GM10248 (cell line): ENCODE measurements at regions of chr3 and their contacts with region 1.

Region 1: DNA sequence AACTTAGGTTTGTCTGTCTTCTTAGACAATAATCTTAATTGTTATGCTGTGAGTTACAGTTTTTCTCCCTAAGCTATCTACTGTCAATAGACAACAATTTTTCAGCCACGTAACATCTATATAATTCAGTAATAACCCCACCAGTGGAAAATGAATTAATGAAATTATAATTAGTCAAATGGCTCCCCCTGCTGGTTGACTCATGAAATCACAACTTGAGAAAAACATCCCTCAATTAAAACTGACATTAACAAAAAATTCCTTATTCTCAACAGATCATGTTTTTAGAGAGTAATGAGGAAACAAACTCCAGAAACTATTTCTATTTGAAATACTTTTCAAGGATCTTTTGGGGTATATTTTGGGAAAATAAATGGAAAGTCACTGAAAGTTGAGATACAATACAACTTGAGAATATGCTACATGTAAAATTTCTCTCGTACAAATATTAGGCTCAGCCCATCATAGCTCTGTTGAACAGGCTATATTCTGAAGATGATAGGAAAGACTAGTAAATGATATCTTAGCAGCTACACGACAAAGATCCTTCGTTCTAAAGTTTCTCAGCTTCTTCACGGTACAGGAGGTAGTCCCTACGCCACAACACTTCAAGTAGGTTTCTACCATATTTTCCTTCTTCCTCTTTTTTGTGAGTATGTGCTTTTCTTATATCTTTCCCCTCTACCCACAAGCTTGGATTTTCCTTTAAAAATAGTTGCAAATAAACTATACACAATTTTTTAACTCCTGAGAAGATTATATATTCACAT is 20.7 kb downstream of the PPP1R2 start:
- DNase-seq: peak; percentile 54
- CTCF ChIP-seq: peak; percentile 52

Region 2: DNA sequence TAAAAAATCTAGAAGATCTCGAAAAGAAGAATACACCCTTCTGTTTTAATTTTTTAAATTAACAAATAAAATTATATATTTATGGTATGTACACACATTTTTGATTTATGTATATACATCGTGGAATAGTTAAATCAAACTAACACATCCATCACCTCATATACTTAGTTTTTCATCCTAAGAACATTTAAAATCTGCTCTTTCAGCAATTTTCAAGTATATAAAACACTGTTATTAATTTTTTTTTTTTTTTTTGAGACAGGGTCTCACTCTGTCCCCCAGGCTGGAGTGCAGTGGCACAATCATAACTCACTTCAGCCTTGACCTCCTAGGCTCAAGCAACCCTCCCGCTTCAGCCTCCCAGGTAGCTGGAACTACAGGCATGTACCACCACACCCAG is 46.8 kb before region 1 on chr3:
- CTCF ChIA-PET with region 1: no interaction called
- POLR2A ChIA-PET with region 1: no interaction called
- DNase-seq: no peak
- CTCF ChIP-seq: no peak

Region 3: DNA sequence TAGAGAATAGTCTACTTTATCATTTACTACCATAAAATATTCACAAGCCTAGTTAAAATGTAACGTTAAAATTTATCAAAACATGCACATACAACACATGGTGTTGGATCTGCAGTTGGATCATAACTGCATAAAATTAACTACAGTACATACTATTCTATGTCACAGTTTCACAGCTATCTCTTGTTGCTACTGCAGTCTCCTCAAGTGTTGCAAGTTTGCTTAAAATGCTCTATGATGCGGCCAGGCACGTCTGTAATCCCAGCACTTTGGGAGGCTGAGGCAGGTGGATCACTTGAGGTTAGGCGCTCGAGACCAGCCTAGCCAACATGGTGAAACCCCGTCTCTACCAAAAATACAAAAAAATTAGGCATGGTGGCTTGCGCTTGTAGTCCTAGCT is 10.4 kb after region 1 on chr3:
- CTCF ChIA-PET with region 1: interaction called, 22 read pairs
- POLR2A ChIA-PET with region 1: no interaction called
- DNase-seq: no peak
- CTCF ChIP-seq: no peak

Region 4: GRCh38 chr3:195542698-195543499 is 20.5 kb after region 1 on chr3 and contains the start of gene PPP1R2:
- CTCF ChIA-PET with region 1: interaction called, 22 read pairs
- POLR2A ChIA-PET with region 1: interaction called, 3 read pairs
- DNase-seq: peak; percentile 96
- CTCF ChIP-seq: no peak

Region 5: DNA sequence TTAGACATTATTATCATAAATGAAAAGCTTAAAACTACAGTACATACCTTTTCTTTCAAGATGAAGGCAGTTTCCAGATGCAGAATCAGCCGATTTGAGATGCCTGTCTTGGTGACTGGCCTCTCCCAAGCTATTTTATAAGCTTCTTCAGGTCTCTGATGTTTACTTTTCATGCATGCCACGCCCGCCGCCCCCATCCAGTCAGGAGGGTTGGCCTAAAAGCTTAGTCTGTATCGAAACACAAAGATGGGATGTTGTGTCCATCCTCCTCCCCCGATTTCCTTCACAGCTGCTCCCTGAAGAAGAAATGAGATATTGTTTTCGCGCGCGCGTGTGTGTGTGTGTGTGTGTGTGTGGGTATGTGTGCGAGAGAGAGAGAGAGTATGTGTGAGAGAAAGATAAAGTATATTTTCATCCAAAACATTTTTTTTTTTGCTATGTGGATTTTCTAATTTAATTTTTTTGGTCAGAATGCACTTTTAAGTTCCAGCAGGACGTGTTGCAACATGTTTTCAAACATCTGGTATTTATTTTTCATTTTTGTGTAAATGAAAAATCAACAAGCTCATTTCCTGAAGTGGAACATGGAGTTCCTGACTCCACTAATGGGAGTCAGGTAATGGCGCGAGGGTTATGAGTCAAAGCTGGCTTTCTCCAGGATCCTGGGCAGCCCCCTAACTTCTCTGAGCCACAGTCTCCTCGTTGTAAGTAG is 61.5 kb after region 1 on chr3 and contains the start of gene APOD:
- CTCF ChIA-PET with region 1: no interaction called
- POLR2A ChIA-PET with region 1: no interaction called
- DNase-seq: no peak
- CTCF ChIP-seq: no peak

Region 6: DNA sequence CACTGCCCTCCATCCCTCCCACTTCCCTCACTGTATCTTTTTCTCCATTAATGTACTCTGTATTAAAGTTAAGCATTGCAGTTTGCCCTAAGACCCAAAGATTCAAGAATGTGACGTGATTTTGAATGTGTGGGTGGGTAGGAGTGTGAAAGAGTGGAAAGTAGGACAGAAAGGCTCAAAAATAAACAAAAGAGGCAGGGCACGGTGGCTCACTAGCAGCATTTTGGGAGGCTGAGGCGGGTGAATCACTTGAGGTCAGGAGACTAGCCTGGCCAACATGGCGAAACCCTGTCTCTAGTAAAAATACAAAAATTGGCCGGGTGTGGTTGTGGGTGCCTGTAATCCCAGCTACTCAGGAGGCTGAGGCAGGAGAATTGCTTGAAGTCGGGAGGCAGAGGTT is 541.0 kb after region 1 on chr3:
- CTCF ChIA-PET with region 1: no interaction called
- POLR2A ChIA-PET with region 1: no interaction called
- DNase-seq: no peak
- CTCF ChIP-seq: no peak